Activated T-helper 1 cell treated with anti-CD3 and anti-CD28 coated beads, Interleukin-12 subunit alpha, Interleukin-12 subunit beta, Interleukin-2, Interleukin-4 antibody, amounts not matched to agents 30 ng/mL and 10 ng/mL and 1 ng/mL, durations not matched to agents 14 hours and 24 hours and 36 hours (primary cell): ENCODE measurements at regions of chr21 and their contacts with region 1.

Region 1: GRCh38 chr21:42799948-42800347 is 79.4 kb downstream of the WDR4 start:
- DNase-seq: no peak
- H3K4me3 Mint-ChIP-seq: no peak overlapping the region
- H3K27ac Mint-ChIP-seq: no peak overlapping the region
- H3K4me1 Mint-ChIP-seq: peaks cover 7% of the 10 kb centered on the region
- H3K27me3 Mint-ChIP-seq: peaks cover 6% of the 10 kb centered on the region

Region 2: GRCh38 chr21:42117229-42117966 is 682.5 kb before region 1 on chr21:
- intact Hi-C with region 1: loop called (anchors 5 kb)
- DNase-seq: peak; percentile 47
- H3K4me3 Mint-ChIP-seq: no peak overlapping the region
- H3K27ac Mint-ChIP-seq: no peak overlapping the region
- H3K4me1 Mint-ChIP-seq: peaks cover 13% of the 10 kb centered on the region
- H3K27me3 Mint-ChIP-seq: peaks cover 38% of the 10 kb centered on the region

Region 3: GRCh38 chr21:42850866-42851391 is 51.0 kb after region 1 on chr21:
- intact Hi-C with region 1: no loop called
- DNase-seq: no peak
- H3K4me3 Mint-ChIP-seq: no peak overlapping the region
- H3K27ac Mint-ChIP-seq: no peak overlapping the region
- H3K4me1 Mint-ChIP-seq: no peaks in the 10 kb centered on the region
- H3K27me3 Mint-ChIP-seq: no peaks in the 10 kb centered on the region